Right cardiac atrium (tissue), 5 donors: ENCODE measurements at regions of chr22 and their contacts with region 1.

Region 1: DNA sequence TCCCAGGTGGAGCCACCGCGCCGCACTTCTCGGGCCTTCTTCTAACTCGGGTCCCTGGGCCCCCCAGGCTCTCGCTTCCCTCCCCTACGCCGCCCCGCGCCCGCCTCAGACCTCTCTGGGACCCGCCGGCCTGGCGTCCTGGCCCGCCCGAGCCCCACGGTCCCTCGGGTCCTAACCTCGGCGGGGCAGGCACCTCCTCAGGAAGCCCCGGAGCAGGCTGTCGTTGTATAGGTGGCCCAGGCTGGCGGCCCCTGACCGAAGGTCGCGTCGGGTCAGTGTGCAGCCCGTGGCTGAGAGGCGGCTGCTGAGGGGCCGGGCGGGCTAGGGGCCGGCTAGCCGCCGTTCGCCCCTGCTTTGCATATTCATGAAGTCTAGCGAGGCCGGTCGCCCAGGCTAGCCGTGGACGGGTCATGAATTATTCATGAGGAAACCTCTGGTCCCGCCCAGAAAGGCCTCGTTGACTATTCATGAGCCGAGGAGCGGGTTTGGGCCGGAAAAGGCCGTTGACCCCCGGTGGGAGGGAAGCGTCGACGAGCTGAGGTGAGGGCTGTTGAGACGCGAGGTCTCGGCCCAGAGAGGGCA is at the start of gene HORMAD2:
- DNase-seq: peak; percentile 26 to 56 (median 48)
- ATAC-seq: peak; percentile 61 to 71
- H3K4me3 ChIP-seq: no peak within 1 kb of the TSS
- H3K27ac ChIP-seq: no peak within 1 kb of the TSS
- H3K4me1 ChIP-seq: no peaks in the 10 kb centered on the region
- H3K27me3 ChIP-seq: no peaks in the 10 kb centered on the region
- total RNA-seq, gene HORMAD2: not detected

Region 2: GRCh38 chr22:29635734-29636357 is 444.2 kb before region 1 on chr22:
- intact Hi-C with region 1: loop called in 3 of 4 experiments (anchors 10 kb)
- DNase-seq: no peak
- ATAC-seq: peak; percentile 44 to 56
- H3K4me3 ChIP-seq: no peak overlapping the region
- H3K27ac ChIP-seq: no peak overlapping the region
- H3K4me1 ChIP-seq: peaks cover 6% of the 10 kb centered on the region
- H3K27me3 ChIP-seq: no peaks in the 10 kb centered on the region

Region 3: DNA sequence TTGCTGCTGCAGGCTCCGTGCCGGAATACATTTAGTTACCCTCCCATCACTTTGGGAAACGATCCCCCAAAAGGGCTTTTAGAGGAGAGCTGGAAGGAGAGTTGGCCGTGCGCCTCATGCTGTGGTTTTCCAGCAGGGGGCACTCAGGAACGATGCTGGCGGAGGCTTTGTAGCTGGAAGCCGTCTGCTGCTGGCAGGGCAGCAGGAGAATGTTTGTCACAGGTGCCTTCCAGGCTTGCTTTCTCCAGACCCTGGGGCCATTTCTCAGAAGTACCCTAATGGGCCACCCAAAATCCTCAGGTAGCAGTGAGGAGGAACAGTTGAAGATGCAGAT is 390.2 kb before region 1 on chr22:
- intact Hi-C with region 1: loop called in 1 of 4 experiments (anchors 10 kb)
- DNase-seq: peak; percentile 64 to 78 (median 78)
- ATAC-seq: peak; percentile 29 to 54
- H3K4me3 ChIP-seq: no peak overlapping the region
- H3K27ac ChIP-seq: no peak overlapping the region
- H3K4me1 ChIP-seq: no peaks in the 10 kb centered on the region
- H3K27me3 ChIP-seq: no peaks in the 10 kb centered on the region